PC-9 (cell line): ENCODE measurements at regions of chr19 and their contacts with region 1.

Region 1: DNA sequence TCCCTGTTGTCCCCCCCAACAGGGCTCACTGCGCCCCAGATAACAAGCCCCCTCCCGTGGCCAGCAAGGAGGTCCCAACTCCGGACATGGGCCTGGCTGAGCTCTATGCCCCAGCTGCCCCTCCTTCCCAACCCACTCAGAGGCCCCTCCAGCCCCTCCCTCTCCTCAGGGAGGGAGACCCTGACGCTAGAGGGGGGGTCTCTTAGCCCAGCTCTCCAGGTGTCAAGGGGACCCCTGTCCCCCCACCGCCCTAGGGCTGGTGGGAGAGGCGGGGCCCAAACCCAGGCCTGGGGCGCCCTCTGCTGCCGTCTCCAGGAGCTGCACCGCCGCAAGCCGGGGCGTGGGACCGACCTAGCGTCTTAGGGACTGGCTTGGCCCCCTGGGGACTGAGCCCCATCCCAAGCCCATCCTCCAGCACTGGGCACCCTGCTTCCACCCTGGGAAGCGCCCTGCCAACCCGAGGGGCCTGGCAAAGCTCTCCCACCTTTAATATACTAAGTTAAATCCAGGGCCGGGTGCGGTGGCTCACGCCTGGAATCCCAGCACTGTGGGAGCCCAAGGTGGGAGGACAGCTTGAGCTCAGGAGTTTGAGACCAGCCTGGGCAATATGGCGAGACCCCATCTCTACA is 1.4 kb downstream of the GRIN3B start:
- DNase-seq: peak in 1 of 2 experiments; percentile 59
- H3K4me3 ChIP-seq: no peak overlapping the region
- H3K27ac ChIP-seq: no peak overlapping the region
- H3K4me1 ChIP-seq: peaks cover 2% of the 10 kb centered on the region
- H3K27me3 ChIP-seq: peaks cover 34% of the 10 kb centered on the region
- CTCF ChIP-seq: peak; percentile 94

Region 2: GRCh38 chr19:925526-926322 is 75.9 kb before region 1 on chr19 and contains the start of gene ARID3A:
- CTCF ChIA-PET with region 1: no interaction called
- POLR2A ChIA-PET with region 1: no interaction called
- intact Hi-C with region 1: loop called (anchors 1 kb)
- DNase-seq: peak; percentile 53 to 80
- H3K4me3 ChIP-seq: peak within 1 kb of the TSS; percentile 77
- H3K27ac ChIP-seq: no peak within 1 kb of the TSS
- H3K4me1 ChIP-seq: no peaks in the 10 kb centered on the region; the same call in 1 of the 2 replicates
- H3K27me3 ChIP-seq: no peaks in the 10 kb centered on the region; the same call in 1 of the 2 replicates
- CTCF ChIP-seq: no peak
- total RNA-seq, gene ARID3A: 9.2 and 10.7 TPM in 2 replicates

Region 3: DNA sequence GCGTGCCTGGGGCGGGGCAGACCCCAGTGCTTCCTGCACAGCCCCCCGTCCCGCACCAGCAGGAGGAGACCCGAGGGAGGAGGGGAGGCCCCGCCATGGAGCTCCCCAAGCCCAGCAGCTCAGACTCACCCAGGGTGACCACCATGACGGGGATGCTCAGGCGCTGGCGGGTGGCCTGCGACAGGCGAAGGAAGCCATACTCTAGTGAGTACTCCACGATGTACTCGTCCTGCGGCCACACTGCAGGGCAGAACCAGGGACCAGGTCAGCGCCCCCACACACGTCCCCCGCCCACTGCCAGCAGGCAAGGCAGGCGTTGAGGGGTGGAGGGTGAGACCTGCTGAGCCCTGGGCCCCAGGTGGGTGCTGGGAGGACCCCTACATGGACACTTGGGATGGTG is 10.7 kb after region 1 on chr19:
- CTCF ChIA-PET with region 1: interaction called, 11 read pairs
- POLR2A ChIA-PET with region 1: no interaction called
- intact Hi-C with region 1: no loop called
- DNase-seq: no peak
- H3K4me3 ChIP-seq: no peak overlapping the region
- H3K27ac ChIP-seq: no peak overlapping the region
- H3K4me1 ChIP-seq: peaks cover 12% of the 10 kb centered on the region
- H3K27me3 ChIP-seq: no peaks in the 10 kb centered on the region
- CTCF ChIP-seq: no peak